Esophagus muscularis mucosa (tissue), 4 donors: ENCODE measurements at regions of chr7 and their contacts with region 1.

Region 1: GRCh38 chr7:51366930-51367613 is 50.5 kb upstream of the COBL start:
- DNase-seq: no peak
- H3K4me3 ChIP-seq: no peak overlapping the region
- H3K27ac ChIP-seq: no peak overlapping the region
- H3K4me1 ChIP-seq: peaks cover 0 to 4% (median 0%) of the 10 kb centered on the region in 4 donors
- H3K27me3 ChIP-seq: no peaks in the 10 kb centered on the region
- CTCF ChIP-seq: peak; percentile 73 to 82 (median 74)
- EP300 ChIP-seq: no peak
- POLR2A ChIP-seq: no peak

Region 2: DNA sequence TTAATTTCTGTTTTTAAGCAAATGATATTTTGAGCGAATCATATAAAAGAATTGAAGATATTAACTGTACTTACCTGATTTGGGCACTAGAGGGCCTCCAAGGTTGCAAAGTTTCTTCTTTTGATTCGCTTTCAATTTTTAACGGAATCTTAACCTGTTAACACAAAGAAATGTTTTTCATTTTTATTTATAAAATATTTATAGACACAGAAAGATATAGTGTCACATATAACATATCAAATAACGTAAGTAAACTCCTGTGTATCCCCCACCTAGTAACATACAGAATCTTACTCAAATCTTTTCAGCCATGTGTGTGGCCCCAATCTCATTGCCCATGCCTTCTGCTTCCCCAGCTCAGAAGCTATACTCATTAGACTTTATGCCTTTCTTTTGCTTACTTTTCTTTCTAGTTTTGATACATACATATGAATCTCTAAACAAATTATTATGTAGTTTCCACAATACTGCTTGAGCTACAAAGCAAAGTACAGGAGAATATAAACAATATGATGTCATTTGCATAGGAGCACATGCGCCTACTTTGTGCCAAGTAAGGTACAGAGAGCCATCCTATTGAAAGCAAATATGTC is 1224.6 kb before region 1 on chr7:
- intact Hi-C with region 1: loop called (anchors 5 kb)
- DNase-seq: no peak
- H3K4me3 ChIP-seq: no peak overlapping the region
- H3K27ac ChIP-seq: no peak overlapping the region
- H3K4me1 ChIP-seq: no peaks in the 10 kb centered on the region
- H3K27me3 ChIP-seq: no peaks in the 10 kb centered on the region
- CTCF ChIP-seq: peak; percentile 61 to 70 (median 62)
- EP300 ChIP-seq: no peak
- POLR2A ChIP-seq: no peak

Region 3: DNA sequence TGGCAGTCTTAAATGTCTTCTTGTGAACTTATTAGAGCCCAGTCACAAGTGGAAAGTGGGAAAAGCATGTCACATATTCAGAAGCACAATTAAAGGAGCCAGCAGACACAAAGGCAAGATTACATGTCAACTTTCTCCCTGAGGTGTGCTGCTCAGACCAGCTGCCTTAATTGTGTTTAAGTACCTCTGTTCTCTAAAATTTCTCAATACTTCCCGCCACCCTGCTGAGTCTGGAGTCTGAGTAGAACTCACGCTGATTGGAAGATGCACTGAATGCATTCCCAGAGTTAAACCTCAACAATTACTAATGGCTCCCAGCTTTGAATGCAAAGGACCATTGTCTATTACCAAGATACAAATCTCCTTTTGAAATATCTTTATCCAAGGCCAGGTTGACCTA is 115.9 kb after region 1 on chr7:
- intact Hi-C with region 1: no loop called
- DNase-seq: no peak
- H3K4me3 ChIP-seq: no peak overlapping the region
- H3K27ac ChIP-seq: no peak overlapping the region
- H3K4me1 ChIP-seq: no peaks in the 10 kb centered on the region
- H3K27me3 ChIP-seq: no peaks in the 10 kb centered on the region
- CTCF ChIP-seq: no peak
- EP300 ChIP-seq: no peak
- POLR2A ChIP-seq: no peak